IMR-90 (cell line): ENCODE measurements at regions of chr1 and their contacts with region 1.

Region 1: DNA sequence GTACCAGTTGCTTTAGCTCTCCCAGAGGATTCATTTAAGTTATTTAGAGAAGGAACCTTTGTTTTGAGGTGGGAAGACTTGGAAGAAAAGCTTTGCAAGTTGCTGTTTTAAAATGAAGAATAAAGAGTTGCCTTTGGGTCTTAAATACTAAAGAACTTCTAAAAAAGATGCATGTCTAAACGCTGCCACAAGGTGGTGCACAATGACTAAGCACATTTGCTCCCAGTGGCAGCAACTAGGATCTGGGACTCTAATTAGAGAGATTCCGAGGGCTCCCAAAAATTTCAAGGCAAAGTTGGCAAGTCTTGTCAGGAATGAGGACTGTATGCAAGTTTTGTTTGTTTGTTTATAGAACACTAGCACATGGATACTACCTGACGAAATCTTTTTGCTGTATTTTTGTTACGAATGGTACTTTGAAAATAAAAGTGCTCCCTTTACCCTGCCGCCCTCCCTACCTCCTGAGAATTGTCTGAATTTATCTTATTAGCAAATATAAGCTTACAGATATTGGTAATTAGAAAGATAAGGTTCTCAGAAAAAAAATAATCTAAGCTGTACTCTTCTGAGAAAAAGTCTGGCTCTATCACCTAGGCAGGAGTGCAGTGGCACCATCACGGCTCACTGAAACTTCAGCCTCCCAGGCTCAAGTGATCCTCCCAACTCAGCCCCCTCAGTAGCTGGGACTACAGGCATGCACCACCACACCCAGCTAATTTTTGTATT is 121.8 kb downstream of the HFM1 start:
- DNase-seq: peak; percentile 73
- ATAC-seq: peak; percentile 91
- H3K4me3 ChIP-seq: no peak overlapping the region
- H3K27ac ChIP-seq: no peak overlapping the region
- H3K4me1 ChIP-seq: no peaks in the 10 kb centered on the region
- H3K27me3 ChIP-seq: no peaks in the 10 kb centered on the region; the same call in 1 of the 2 replicates
- CTCF ChIP-seq: peak; percentile 80
- POLR2A ChIP-seq: no peak
- RAD21 ChIP-seq: peak; percentile 80

Region 2: DNA sequence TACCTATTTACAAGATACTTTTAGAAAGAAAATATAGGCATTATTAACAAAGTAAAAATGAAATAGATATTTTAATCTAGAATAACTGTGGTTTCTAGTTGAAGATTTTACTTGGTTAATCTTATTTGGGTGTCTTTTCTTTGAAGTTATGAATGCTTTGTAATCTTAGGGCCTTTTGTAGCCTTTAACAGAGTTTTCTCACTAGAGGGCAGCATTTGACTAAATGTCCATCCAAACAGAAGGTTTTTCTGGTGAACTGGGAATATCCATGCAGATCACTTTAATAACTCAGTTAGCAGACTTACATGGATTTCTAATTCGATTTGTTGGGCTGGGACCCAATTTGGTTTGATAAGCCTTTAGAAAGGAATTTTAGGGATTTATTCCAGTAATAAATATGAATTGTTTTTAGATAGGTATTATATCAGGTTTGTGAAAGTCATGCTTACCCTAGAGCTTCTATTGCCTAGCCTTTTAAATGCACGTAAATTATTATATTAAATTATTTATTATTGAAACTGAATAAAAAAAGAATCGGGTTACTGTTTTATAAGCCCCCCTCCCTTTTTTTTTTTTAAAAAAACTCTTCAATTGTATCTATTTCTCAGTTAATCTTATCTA is 1168.2 kb before region 1 on chr1:
- CTCF ChIA-PET with region 1: no interaction called
- POLR2A ChIA-PET with region 1: no interaction called
- dilution Hi-C with region 1: no loop called
- in situ Hi-C with region 1: no loop called
- intact Hi-C with region 1: loop called (anchors 10 kb)
- DNase-seq: peak; percentile 49
- ATAC-seq: peak; percentile 53; the same call in 1 of the 2 replicates
- H3K4me3 ChIP-seq: no peak overlapping the region
- H3K27ac ChIP-seq: no peak overlapping the region
- H3K4me1 ChIP-seq: no peaks in the 10 kb centered on the region
- H3K27me3 ChIP-seq: no peaks in the 10 kb centered on the region
- CTCF ChIP-seq: peak; percentile 70
- POLR2A ChIP-seq: no peak
- RAD21 ChIP-seq: peak; percentile 63

Region 3: DNA sequence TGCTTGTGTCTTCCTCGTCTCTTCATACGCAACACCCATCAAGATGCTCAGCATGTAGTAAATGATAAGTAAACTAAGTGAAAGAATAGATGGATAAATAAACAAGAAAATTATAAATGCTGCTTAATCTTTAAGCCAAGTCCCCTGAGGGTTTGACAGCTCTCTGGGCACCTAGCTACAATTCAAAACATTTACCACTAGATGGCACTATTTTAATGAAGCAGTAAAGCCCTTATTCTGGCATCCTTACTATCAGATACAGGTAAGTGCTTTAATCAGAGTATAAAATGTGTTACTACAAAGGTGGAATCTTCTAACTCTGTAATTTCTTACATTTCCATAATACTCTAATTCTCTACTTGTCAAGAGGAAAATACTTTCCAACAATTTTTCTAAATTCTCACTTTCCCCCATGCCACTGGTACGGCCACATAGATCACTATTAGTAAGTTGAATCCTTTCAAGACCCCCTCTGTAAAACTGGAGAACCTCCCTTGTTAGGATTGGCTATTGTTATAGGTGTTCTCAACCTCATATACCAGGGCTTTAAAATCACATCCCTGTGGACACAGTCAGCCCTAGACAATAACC is 703.6 kb before region 1 on chr1:
- CTCF ChIA-PET with region 1: no interaction called
- POLR2A ChIA-PET with region 1: no interaction called
- dilution Hi-C with region 1: no loop called
- in situ Hi-C with region 1: no loop called
- intact Hi-C with region 1: loop called (anchors 1 kb)
- DNase-seq: peak; percentile 40
- ATAC-seq: peak; percentile 54; the same call in 1 of the 2 replicates
- H3K4me3 ChIP-seq: no peak overlapping the region
- H3K27ac ChIP-seq: no peak overlapping the region
- H3K4me1 ChIP-seq: no peaks in the 10 kb centered on the region
- H3K27me3 ChIP-seq: no peaks in the 10 kb centered on the region
- CTCF ChIP-seq: peak; percentile 56
- POLR2A ChIP-seq: no peak
- RAD21 ChIP-seq: peak; percentile 50

Region 4: DNA sequence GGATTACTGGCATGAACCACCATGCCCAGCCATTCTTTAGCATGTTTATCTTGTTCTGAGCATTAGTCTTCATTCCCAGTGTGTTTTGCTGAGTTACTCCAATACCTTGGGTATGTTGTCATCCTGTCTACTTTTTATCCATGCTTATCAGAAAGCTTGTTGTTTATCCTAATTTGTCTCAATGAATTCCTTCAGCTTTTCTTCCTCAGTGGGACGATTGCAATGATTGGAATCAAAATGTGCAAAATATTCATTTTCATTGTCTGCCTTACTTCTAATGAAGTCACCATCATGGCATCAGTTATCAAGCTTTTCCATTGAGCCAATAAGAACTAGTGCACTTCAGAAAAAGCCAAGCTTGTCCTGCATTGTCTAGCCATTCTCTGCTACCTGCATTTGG is 48.7 kb before region 1 on chr1:
- CTCF ChIA-PET with region 1: no interaction called
- POLR2A ChIA-PET with region 1: no interaction called
- dilution Hi-C with region 1: no loop called
- in situ Hi-C with region 1: no loop called
- intact Hi-C with region 1: no loop called
- DNase-seq: no peak
- ATAC-seq: no peak
- H3K4me3 ChIP-seq: no peak overlapping the region
- H3K27ac ChIP-seq: no peak overlapping the region
- H3K4me1 ChIP-seq: no peaks in the 10 kb centered on the region
- H3K27me3 ChIP-seq: no peaks in the 10 kb centered on the region
- CTCF ChIP-seq: no peak
- POLR2A ChIP-seq: no peak
- RAD21 ChIP-seq: no peak

Region 5: DNA sequence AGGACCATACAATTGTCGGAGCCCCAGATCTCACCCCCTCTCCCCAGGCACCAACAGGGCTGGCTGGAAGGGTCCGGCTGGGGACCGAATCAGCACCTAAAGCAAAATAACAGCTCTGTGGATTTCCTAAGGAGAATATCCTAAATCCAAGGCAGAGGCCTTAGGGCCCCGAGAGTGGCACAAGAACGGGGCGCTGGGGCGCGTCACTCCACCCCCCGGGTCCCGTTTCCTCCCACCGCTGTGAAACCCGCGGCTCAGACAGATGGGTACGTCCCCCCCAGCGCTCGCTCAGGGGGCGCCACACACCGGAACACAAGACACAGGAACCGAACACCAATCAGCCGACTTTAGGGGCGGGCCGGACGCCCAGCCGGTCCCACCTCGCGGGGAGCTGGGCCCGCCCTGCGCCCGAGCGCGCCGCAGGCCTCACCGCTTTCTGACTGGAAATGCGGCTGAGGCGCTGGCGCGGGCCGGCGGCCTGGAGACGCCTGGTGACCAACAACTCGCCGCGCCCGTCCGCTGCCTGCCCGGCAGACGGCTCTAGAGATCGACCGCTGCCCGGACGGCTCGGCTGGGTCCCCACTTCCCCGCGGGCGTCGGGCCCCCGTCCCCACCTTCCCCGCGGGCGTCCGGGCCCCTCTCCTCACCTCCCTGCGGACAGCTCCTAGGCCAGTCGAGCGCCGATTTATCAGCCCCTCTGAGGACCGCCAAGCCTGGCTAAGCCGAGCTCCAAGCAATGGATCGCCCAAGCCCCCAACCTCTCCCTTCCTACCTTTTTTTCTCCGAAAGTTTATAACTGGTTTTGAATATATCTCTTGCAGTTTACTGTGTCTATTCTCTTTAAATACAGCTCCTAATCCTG is 121.5 kb after region 1 on chr1 and contains the start of gene HFM1:
- CTCF ChIA-PET with region 1: interaction called, 7 read pairs
- POLR2A ChIA-PET with region 1: no interaction called
- dilution Hi-C with region 1: no loop called
- in situ Hi-C with region 1: no loop called
- intact Hi-C with region 1: loop called (anchors 1 kb)
- DNase-seq: peak; percentile 69
- ATAC-seq: peak; percentile 99
- H3K4me3 ChIP-seq: peak within 1 kb of the TSS; percentile 52
- H3K27ac ChIP-seq: no peak within 1 kb of the TSS; the same call in 1 of the 2 replicates
- H3K4me1 ChIP-seq: no peaks in the 10 kb centered on the region
- H3K27me3 ChIP-seq: no peaks in the 10 kb centered on the region; the same call in 1 of the 2 replicates
- CTCF ChIP-seq: no peak
- POLR2A ChIP-seq: no peak
- RAD21 ChIP-seq: no peak
- total RNA-seq, gene HFM1: 0.18 and 0.83 TPM in 2 replicates

Region 6: DNA sequence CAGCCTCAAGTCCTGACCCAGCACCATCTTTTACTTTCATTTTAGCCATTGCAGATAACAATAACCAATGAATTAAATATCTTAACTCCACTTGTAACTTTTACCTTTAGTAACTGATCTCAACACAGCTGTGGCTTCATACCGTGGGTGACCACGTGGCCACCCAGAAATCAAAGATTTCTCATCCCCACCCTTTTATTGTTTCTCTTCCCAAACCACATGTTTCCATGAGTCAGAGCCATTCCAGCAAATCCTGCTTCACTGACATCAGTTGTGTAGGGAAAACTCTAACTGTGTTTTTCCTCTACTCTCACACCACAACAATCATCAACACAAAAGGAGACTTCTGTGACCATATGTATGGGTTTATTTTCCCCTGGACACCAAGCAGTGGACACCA is 641.3 kb after region 1 on chr1:
- CTCF ChIA-PET with region 1: no interaction called
- POLR2A ChIA-PET with region 1: no interaction called
- dilution Hi-C with region 1: no loop called
- in situ Hi-C with region 1: loop called (anchors 10 kb)
- intact Hi-C with region 1: no loop called
- DNase-seq: peak; percentile 91
- ATAC-seq: peak; percentile 75
- H3K4me3 ChIP-seq: no peak overlapping the region
- H3K27ac ChIP-seq: no peak overlapping the region
- H3K4me1 ChIP-seq: peaks cover 4% of the 10 kb centered on the region
- H3K27me3 ChIP-seq: no peaks in the 10 kb centered on the region
- CTCF ChIP-seq: no peak
- POLR2A ChIP-seq: no peak
- RAD21 ChIP-seq: no peak